Activated B cell treated with CpG ODN at 0.5 μM for 24 hours (primary cell): ENCODE measurements at regions of chr3 and their contacts with region 1.

Region 1: GRCh38 chr3:31946484-31947081 is 34.5 kb downstream of the OSBPL10 start:
- DNase-seq: peak; percentile 30
- ATAC-seq: peak; percentile 46
- H3K4me3 Mint-ChIP-seq: peak overlapping the region; percentile 50
- H3K27ac Mint-ChIP-seq: peak overlapping the region; percentile 97
- H3K4me1 Mint-ChIP-seq: peaks cover 83% of the 10 kb centered on the region
- H3K27me3 Mint-ChIP-seq: no peaks in the 10 kb centered on the region
- CTCF ChIP-seq: no peak

Region 2: DNA sequence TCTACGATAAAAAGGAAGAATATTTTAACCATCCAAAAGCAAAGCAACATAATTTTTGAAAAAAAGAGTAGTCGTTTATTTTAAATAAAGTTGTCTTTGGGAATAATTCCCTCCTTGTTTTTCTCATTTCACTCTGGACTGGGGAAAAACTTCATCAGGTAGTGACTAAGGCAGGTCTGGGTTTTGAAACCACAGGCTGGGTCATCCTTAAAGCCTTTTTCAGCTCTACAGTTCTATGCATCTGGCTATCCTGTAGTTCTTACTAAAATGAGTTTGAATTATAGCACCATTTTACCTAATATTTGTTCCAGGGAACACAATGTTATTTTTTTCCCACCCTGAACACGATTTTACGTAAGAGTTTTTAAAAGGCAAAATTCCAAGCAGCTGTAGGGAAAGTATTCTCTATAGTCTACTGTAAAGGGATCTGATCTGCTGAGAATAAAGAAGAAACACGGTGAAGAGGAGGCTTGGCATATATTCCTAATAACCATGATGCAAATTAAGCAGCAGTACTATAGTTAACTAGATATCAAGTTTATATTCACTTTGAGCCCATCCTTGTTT is 73.2 kb before region 1 on chr3:
- CTCF ChIA-PET with region 1: interaction called, 3 read pairs
- POLR2A ChIA-PET with region 1: interaction called, 12 read pairs
- intact Hi-C with region 1: no loop called
- DNase-seq: no peak
- ATAC-seq: no peak
- H3K4me3 Mint-ChIP-seq: no peak overlapping the region
- H3K27ac Mint-ChIP-seq: peak overlapping the region; percentile 1
- H3K4me1 Mint-ChIP-seq: peaks cover 34% of the 10 kb centered on the region
- H3K27me3 Mint-ChIP-seq: no peaks in the 10 kb centered on the region
- CTCF ChIP-seq: no peak

Region 3: GRCh38 chr3:31925271-31925630 is 21.3 kb before region 1 on chr3:
- CTCF ChIA-PET with region 1: interaction called, 5 read pairs
- POLR2A ChIA-PET with region 1: interaction called, 10 read pairs
- intact Hi-C with region 1: loop called (anchors 1 kb)
- DNase-seq: no peak
- ATAC-seq: peak; percentile 51
- H3K4me3 Mint-ChIP-seq: peak overlapping the region; percentile 36
- H3K27ac Mint-ChIP-seq: peak overlapping the region; percentile 84
- H3K4me1 Mint-ChIP-seq: peaks cover 84% of the 10 kb centered on the region
- H3K27me3 Mint-ChIP-seq: no peaks in the 10 kb centered on the region
- CTCF ChIP-seq: no peak

Region 4: GRCh38 chr3:31936420-31937060 is 10.0 kb before region 1 on chr3:
- CTCF ChIA-PET with region 1: interaction called, 3 read pairs
- POLR2A ChIA-PET with region 1: interaction called, 7 read pairs
- intact Hi-C with region 1: loop called (anchors 1 kb)
- DNase-seq: no peak
- ATAC-seq: peak; percentile 65
- H3K4me3 Mint-ChIP-seq: no peak overlapping the region
- H3K27ac Mint-ChIP-seq: no peak overlapping the region
- H3K4me1 Mint-ChIP-seq: peaks cover 30% of the 10 kb centered on the region
- H3K27me3 Mint-ChIP-seq: no peaks in the 10 kb centered on the region
- CTCF ChIP-seq: no peak

Region 5: GRCh38 chr3:31960793-31961431 is 14.3 kb after region 1 on chr3:
- CTCF ChIA-PET with region 1: interaction called, 6 read pairs
- POLR2A ChIA-PET with region 1: interaction called, 38 read pairs
- intact Hi-C with region 1: loop called (anchors 1 kb)
- DNase-seq: no peak
- ATAC-seq: peak; percentile 66
- H3K4me3 Mint-ChIP-seq: peak overlapping the region; percentile 78
- H3K27ac Mint-ChIP-seq: peak overlapping the region; percentile 94
- H3K4me1 Mint-ChIP-seq: peaks cover 80% of the 10 kb centered on the region
- H3K27me3 Mint-ChIP-seq: no peaks in the 10 kb centered on the region
- CTCF ChIP-seq: no peak

Region 6: GRCh38 chr3:31968927-31969418 is 22.4 kb after region 1 on chr3:
- CTCF ChIA-PET with region 1: interaction called, 3 read pairs
- POLR2A ChIA-PET with region 1: interaction called, 10 read pairs
- intact Hi-C with region 1: no loop called
- DNase-seq: no peak
- ATAC-seq: no peak
- H3K4me3 Mint-ChIP-seq: no peak overlapping the region
- H3K27ac Mint-ChIP-seq: peak overlapping the region; percentile 94
- H3K4me1 Mint-ChIP-seq: peaks cover 83% of the 10 kb centered on the region
- H3K27me3 Mint-ChIP-seq: no peaks in the 10 kb centered on the region
- CTCF ChIP-seq: no peak